Natural killer cell (primary cell): ENCODE measurements at regions of chr7 and their contacts with region 1.

Region 1: GRCh38 chr7:37181550-37181932 is 267.1 kb downstream of the ELMO1 start:
- DNase-seq: no peak
- ATAC-seq: peak in 1 of 3 donors; percentile 23
- H3K4me3 ChIP-seq: no peak overlapping the region
- H3K4me3 Mint-ChIP-seq: no peak overlapping the region
- H3K27ac ChIP-seq: no peak overlapping the region
- H3K27ac Mint-ChIP-seq: no peak overlapping the region
- H3K4me1 ChIP-seq: peaks cover 6% of the 10 kb centered on the region
- H3K4me1 Mint-ChIP-seq: peaks cover 15 to 25% of the 10 kb centered on the region in 2 donors
- H3K27me3 ChIP-seq: no peaks in the 10 kb centered on the region
- H3K27me3 Mint-ChIP-seq: no peaks in the 10 kb centered on the region
- CTCF ChIP-seq: no peak

Region 2: DNA sequence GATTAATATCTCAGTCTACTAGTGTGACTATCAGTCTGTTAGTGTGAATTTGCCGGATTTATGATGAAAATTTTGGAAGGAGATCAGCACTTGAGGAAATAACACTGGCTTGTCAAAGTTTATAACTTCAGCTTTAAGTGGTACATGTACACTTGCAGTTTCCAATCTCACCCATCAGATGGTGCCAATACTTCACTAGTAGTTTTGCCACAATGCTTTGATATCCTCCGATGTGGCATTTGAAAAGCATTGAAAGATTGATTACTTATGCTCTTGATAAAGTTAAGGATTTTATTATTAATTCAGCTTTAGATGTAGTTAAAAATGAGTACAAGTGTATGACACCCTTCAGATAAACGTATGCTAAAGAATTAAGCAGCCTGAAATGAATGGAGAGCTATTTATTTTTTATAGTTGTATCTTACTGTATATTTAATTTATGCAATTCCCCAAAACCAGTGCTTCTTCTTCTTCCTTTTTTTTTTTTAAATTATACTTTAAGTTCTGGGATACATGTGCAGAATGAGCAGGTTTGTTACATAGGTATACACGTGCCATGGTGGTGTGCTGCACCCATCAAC is 693.7 kb before region 1 on chr7:
- intact Hi-C with region 1: loop called (anchors 1 kb)
- DNase-seq: peak in 1 of 2 donors; percentile 83
- ATAC-seq: peak; percentile 80 to 87 (median 84)
- H3K4me3 ChIP-seq: no peak overlapping the region
- H3K4me3 Mint-ChIP-seq: no peak overlapping the region
- H3K27ac ChIP-seq: no peak overlapping the region
- H3K27ac Mint-ChIP-seq: no peak overlapping the region
- H3K4me1 ChIP-seq: no peaks in the 10 kb centered on the region
- H3K4me1 Mint-ChIP-seq: peaks cover 0 to 5% of the 10 kb centered on the region in 2 donors
- H3K27me3 ChIP-seq: no peaks in the 10 kb centered on the region
- H3K27me3 Mint-ChIP-seq: no peaks in the 10 kb centered on the region
- CTCF ChIP-seq: peak; percentile 79

Region 3: GRCh38 chr7:36620166-36620708 is 561.3 kb before region 1 on chr7:
- intact Hi-C with region 1: loop called (anchors 1 kb)
- DNase-seq: no peak
- ATAC-seq: peak; percentile 92 to 94 (median 93)
- H3K4me3 ChIP-seq: no peak overlapping the region
- H3K4me3 Mint-ChIP-seq: peak overlapping the region; percentile 28
- H3K27ac ChIP-seq: peak overlapping the region; percentile 69
- H3K27ac Mint-ChIP-seq: peak overlapping the region; percentile 79 to 89
- H3K4me1 ChIP-seq: peaks cover 11% of the 10 kb centered on the region
- H3K4me1 Mint-ChIP-seq: peaks cover 49 to 63% of the 10 kb centered on the region in 2 donors
- H3K27me3 ChIP-seq: no peaks in the 10 kb centered on the region
- H3K27me3 Mint-ChIP-seq: no peaks in the 10 kb centered on the region
- CTCF ChIP-seq: no peak

Region 4: GRCh38 chr7:36686499-36686898 is 495.0 kb before region 1 on chr7:
- intact Hi-C with region 1: loop called (anchors 5 kb)
- DNase-seq: peak; percentile 49 to 58
- ATAC-seq: peak; percentile 84 to 89 (median 89)
- H3K4me3 ChIP-seq: no peak overlapping the region
- H3K4me3 Mint-ChIP-seq: peak overlapping the region; percentile 79
- H3K27ac ChIP-seq: peak overlapping the region; percentile 32
- H3K27ac Mint-ChIP-seq: peak overlapping the region; percentile 88 to 92
- H3K4me1 ChIP-seq: peaks cover 44% of the 10 kb centered on the region
- H3K4me1 Mint-ChIP-seq: peaks cover 77 to 86% of the 10 kb centered on the region in 2 donors
- H3K27me3 ChIP-seq: no peaks in the 10 kb centered on the region
- H3K27me3 Mint-ChIP-seq: no peaks in the 10 kb centered on the region
- CTCF ChIP-seq: no peak

Region 5: GRCh38 chr7:36736899-36737211 is 444.7 kb before region 1 on chr7:
- intact Hi-C with region 1: no loop called
- DNase-seq: peak in 1 of 2 donors; percentile 51
- ATAC-seq: peak; percentile 64 to 74 (median 73)
- H3K4me3 ChIP-seq: no peak overlapping the region
- H3K4me3 Mint-ChIP-seq: peak overlapping the region; percentile 78
- H3K27ac ChIP-seq: peak overlapping the region; percentile 58
- H3K27ac Mint-ChIP-seq: peak overlapping the region; percentile 82 to 87
- H3K4me1 ChIP-seq: peaks cover 15% of the 10 kb centered on the region
- H3K4me1 Mint-ChIP-seq: peaks cover 40 to 47% of the 10 kb centered on the region in 2 donors
- H3K27me3 ChIP-seq: no peaks in the 10 kb centered on the region
- H3K27me3 Mint-ChIP-seq: no peaks in the 10 kb centered on the region
- CTCF ChIP-seq: no peak

Region 6: DNA sequence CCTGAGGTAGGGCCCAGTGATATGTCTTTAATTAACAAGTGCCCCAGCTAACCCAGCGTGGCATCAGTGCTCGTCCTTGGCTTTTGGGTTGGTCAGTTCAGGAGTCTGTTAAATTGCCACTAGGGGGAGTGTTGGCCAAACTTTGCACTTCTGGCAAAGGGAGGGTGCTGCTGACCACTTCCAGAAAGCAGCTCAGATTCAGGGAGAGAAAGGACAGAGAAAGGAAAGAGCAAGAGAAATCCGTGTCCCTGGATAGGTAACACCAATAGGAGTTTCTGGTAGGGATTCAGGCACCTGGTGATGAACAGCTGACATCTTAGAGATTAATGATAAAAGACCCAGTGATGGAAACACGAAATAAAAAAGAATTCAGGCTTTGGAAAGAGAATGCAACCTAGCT is 214.2 kb before region 1 on chr7:
- intact Hi-C with region 1: loop called (anchors 10 kb)
- DNase-seq: no peak
- ATAC-seq: peak in 1 of 3 donors; percentile 46
- H3K4me3 ChIP-seq: no peak overlapping the region
- H3K4me3 Mint-ChIP-seq: peak overlapping the region; percentile 40
- H3K27ac ChIP-seq: no peak overlapping the region
- H3K27ac Mint-ChIP-seq: peak overlapping the region; percentile 68 to 83
- H3K4me1 ChIP-seq: peaks cover 20% of the 10 kb centered on the region
- H3K4me1 Mint-ChIP-seq: peaks cover 52 to 54% of the 10 kb centered on the region in 2 donors
- H3K27me3 ChIP-seq: no peaks in the 10 kb centered on the region
- H3K27me3 Mint-ChIP-seq: no peaks in the 10 kb centered on the region
- CTCF ChIP-seq: no peak